Esophagus squamous epithelium (tissue), 5 donors: ENCODE measurements at regions of chr12 and their contacts with region 1.

Region 1: DNA sequence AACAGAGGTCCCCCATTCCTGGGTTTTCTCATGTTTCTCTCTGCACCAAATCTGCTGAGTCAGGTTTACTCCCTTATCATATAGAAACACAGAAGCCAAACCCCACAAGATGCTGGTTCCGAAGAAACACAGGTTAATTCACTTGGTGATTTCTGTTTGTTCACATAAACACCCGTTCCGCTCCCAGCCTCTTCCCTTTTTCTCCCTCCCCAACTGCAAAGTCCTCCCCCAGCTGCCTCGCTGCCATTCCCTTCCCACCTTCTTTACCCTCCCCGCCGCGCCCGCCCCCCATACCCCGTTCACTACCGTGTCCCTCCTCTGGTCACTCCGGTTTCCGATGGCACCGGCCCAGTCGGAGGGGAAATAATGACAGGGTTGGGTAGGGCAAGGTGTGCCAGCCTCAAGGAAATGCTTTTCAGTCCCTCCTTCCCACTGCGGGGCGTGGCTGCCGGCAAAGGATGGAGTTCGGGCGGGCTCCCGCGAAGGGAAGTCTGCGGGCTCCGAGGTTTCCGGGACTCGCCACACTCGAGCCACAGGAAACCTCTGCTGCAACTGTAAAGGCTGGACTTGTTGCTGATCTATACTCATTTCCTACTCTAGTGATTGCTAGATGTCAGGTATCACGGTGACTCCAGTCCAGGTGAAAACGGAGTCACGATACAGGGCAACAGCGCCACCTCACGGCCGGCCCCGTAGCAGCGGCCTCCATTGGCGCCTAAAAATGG is at the start of gene STYK1:
- DNase-seq: no peak
- H3K4me3 ChIP-seq: peak within 1 kb of the TSS; percentile 44 to 71 (median 60)
- H3K27ac ChIP-seq: peak within 1 kb of the TSS; percentile 82 to 90 (median 89)
- H3K4me1 ChIP-seq: peaks cover 0 to 24% (median 6%) of the 10 kb centered on the region in 3 donors
- H3K27me3 ChIP-seq: peaks cover 0 to 19% (median 0%) of the 10 kb centered on the region in 4 donors
- CTCF ChIP-seq: peak; percentile 74 to 98 (median 88)
- POLR2A ChIP-seq: no peak
- total RNA-seq, gene STYK1: 3.4 to 11.7 (median 8.2) TPM

Region 2: DNA sequence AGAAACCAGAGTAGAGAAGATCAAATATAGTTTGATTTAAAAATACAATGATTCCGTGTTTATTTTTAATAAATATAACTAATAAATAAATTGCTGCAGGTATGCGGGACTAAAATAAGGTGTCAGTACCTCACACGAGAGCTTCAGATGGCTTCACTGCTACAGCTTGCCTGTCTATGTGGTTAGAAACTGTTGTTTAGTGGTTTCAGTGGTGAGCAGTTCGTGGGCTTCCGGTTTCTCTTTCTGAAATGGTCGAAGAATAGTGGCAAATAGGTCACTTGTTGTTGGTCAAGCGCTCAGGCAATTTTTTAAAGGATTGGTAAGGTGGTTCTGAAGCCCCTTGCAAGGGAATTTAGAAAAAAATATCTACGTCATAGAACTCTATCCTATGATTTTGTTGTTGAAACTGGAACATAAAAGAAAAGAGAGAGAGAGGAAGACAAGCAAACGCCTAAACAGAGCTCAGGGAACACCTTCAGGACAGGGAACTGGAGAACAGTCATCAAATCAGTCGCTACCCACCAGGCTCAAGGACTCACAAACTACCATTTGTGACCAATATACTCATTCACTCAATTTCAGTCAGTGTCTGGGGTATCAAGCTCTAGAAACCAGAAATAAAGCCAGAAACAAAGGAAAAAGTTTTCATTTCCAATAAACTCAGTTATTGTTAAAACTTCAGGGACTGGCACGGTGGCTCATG is 429.9 kb before region 1 on chr12:
- intact Hi-C with region 1: loop called (anchors 10 kb)
- DNase-seq: no peak
- H3K4me3 ChIP-seq: no peak overlapping the region
- H3K27ac ChIP-seq: no peak overlapping the region
- H3K4me1 ChIP-seq: no peaks in the 10 kb centered on the region
- H3K27me3 ChIP-seq: no peaks in the 10 kb centered on the region
- CTCF ChIP-seq: no peak
- POLR2A ChIP-seq: no peak

Region 3: DNA sequence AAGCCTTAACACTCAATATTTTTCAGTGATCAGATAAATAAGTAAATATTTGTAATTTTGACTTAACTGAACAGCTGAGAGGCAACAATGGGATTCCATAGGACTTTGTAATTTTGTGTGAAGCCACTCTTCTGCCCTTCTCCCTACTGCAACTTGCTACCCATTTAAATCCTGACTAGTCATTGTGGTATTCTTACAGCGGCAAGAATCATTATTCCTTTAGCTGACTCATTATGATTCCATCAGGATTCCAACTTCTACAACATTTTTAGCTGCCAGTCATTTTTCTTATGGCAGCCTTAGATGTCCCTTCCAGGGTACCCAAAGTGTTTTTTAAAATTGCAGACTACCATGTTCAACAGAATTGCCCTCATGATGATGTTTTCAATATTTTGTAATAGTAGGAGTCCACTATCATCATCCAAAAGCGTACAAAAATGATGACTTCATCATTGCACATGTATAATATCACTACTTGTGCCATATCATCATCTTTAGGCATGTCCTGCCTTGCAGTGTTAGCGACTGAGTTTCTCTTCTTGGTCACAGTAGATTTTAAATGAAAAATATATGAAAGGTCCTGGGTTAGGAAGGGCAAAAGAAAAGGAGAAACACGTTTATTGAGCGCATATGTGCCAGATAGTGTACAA is 55.4 kb before region 1 on chr12:
- intact Hi-C with region 1: no loop called
- DNase-seq: no peak
- H3K4me3 ChIP-seq: no peak overlapping the region
- H3K27ac ChIP-seq: no peak overlapping the region
- H3K4me1 ChIP-seq: peaks cover 0 to 9% (median 0%) of the 10 kb centered on the region in 3 donors
- H3K27me3 ChIP-seq: no peaks in the 10 kb centered on the region
- CTCF ChIP-seq: no peak
- POLR2A ChIP-seq: no peak

Region 4: DNA sequence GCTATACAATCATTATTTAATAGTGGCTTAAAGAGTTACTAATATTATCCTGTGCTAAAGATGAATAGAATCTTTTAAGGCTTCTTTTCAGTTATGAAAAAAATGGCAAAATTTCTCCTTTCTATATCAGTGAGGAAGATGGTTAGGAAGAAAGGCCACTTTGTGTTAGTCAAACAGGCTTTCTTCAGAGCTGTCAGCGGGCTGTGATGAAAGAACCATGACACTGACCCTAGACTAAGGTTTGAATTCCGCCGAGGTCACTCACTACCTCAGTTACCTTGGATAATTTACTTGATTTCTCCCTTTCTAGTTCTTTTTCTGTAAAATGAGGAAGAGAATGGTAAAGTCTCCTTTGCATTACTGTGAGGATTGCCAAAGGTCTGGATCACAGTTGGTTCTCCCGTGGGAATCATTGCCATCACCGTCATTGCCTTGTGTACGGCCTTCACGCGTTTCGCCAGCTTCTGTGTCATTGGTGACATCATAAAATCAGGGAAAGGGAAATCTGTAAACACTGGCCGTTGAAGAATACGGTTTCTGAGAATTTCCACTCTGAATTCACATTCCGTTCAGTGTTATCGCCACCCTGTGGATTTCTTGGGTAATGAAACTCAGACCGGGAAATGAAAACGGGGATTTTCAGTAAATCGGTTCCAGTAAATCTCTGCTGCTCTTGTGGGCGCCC is 76.0 kb after region 1 on chr12:
- intact Hi-C with region 1: loop called (anchors 10 kb)
- DNase-seq: no peak
- H3K4me3 ChIP-seq: peak overlapping the region in 3 of 4 donors; percentile 23 to 57 (median 26)
- H3K27ac ChIP-seq: peak overlapping the region; percentile 5 to 63 (median 34)
- H3K4me1 ChIP-seq: peaks cover 0 to 14% (median 0%) of the 10 kb centered on the region in 3 donors
- H3K27me3 ChIP-seq: peaks cover 0 to 5% (median 0%) of the 10 kb centered on the region in 4 donors
- CTCF ChIP-seq: peak; percentile 89 to 94 (median 92)
- POLR2A ChIP-seq: no peak

Region 5: GRCh38 chr12:10810068-10810467 is 136.2 kb after region 1 on chr12 and contains the start of gene TAS2R9:
- intact Hi-C with region 1: no loop called
- DNase-seq: no peak
- H3K4me3 ChIP-seq: no peak within 1 kb of the TSS
- H3K27ac ChIP-seq: no peak within 1 kb of the TSS
- H3K4me1 ChIP-seq: no peaks in the 10 kb centered on the region
- H3K27me3 ChIP-seq: no peaks in the 10 kb centered on the region
- CTCF ChIP-seq: no peak
- POLR2A ChIP-seq: no peak
- total RNA-seq, gene TAS2R9: 0.66 TPM in 1 of 4 donors, not detected in the others

Region 6: DNA sequence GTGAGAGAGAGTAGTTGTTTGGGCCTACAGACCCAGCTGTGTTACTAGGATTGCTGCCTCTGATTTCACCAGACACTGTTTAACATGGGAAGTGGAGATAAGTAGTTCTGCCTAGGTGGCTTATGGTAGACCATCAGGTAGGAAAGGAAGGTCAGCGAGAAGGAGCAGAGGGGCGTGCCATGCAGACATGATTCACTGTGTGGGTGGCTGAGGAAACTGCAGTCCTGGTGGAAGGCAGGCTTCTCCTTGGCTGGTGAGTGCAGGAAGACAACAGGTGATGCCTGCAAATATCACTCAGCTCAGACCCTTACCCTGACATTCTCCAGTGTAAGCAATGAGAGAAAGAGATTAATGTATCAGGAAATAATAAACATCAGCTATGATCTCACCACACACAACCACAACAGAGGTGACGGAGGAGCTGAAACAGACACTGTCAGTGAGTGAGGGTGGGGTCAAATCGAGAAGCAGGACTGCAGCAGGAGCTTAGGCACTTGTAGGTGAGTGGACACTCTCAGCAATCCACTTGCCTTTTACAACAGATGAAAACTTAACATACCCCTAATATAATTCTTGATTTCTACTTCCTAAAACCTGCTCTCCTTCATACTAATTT is 177.5 kb after region 1 on chr12:
- intact Hi-C with region 1: no loop called
- DNase-seq: no peak
- H3K4me3 ChIP-seq: no peak overlapping the region
- H3K27ac ChIP-seq: no peak overlapping the region
- H3K4me1 ChIP-seq: no peaks in the 10 kb centered on the region
- H3K27me3 ChIP-seq: no peaks in the 10 kb centered on the region
- CTCF ChIP-seq: no peak
- POLR2A ChIP-seq: no peak